Activated T-helper 1 cell treated with anti-CD3 and anti-CD28 coated beads, Interleukin-12 subunit alpha, Interleukin-12 subunit beta, Interleukin-2, Interleukin-4 antibody, amounts not matched to agents 30 ng/mL and 10 ng/mL and 1 ng/mL, durations not matched to agents 14 hours and 24 hours and 36 hours (primary cell): ENCODE measurements at regions of chr10 and their contacts with region 1.

Region 1: GRCh38 chr10:43461950-43462349 is 25.0 kb downstream of the ZNF487 start:
- DNase-seq: peak; percentile 33
- H3K4me3 Mint-ChIP-seq: no peak overlapping the region
- H3K27ac Mint-ChIP-seq: no peak overlapping the region
- H3K4me1 Mint-ChIP-seq: peaks cover 21% of the 10 kb centered on the region
- H3K27me3 Mint-ChIP-seq: peaks cover 1% of the 10 kb centered on the region

Region 2: GRCh38 chr10:42753126-42753506 is 708.8 kb before region 1 on chr10:
- intact Hi-C with region 1: loop called (anchors 1 kb)
- DNase-seq: peak; percentile 55
- H3K4me3 Mint-ChIP-seq: peak overlapping the region; percentile 45
- H3K27ac Mint-ChIP-seq: no peak overlapping the region
- H3K4me1 Mint-ChIP-seq: peaks cover 5% of the 10 kb centered on the region
- H3K27me3 Mint-ChIP-seq: peaks cover 54% of the 10 kb centered on the region

Region 3: GRCh38 chr10:43204943-43205671 is 256.8 kb before region 1 on chr10:
- intact Hi-C with region 1: loop called (anchors 1 kb)
- DNase-seq: peak; percentile 36
- H3K4me3 Mint-ChIP-seq: no peak overlapping the region
- H3K27ac Mint-ChIP-seq: no peak overlapping the region
- H3K4me1 Mint-ChIP-seq: no peaks in the 10 kb centered on the region
- H3K27me3 Mint-ChIP-seq: no peaks in the 10 kb centered on the region

Region 4: GRCh38 chr10:43265799-43266721 is 195.9 kb before region 1 on chr10:
- intact Hi-C with region 1: loop called (anchors 1 kb)
- DNase-seq: no peak
- H3K4me3 Mint-ChIP-seq: peak overlapping the region; percentile 80
- H3K27ac Mint-ChIP-seq: no peak overlapping the region
- H3K4me1 Mint-ChIP-seq: no peaks in the 10 kb centered on the region
- H3K27me3 Mint-ChIP-seq: peaks cover 54% of the 10 kb centered on the region

Region 5: GRCh38 chr10:43292755-43293676 is 168.9 kb before region 1 on chr10:
- intact Hi-C with region 1: loop called (anchors 1 kb)
- DNase-seq: no peak
- H3K4me3 Mint-ChIP-seq: peak overlapping the region; percentile 9
- H3K27ac Mint-ChIP-seq: peak overlapping the region; percentile 73
- H3K4me1 Mint-ChIP-seq: peaks cover 86% of the 10 kb centered on the region
- H3K27me3 Mint-ChIP-seq: peaks cover 9% of the 10 kb centered on the region

Region 6: GRCh38 chr10:43728425-43728824 is 266.5 kb after region 1 on chr10:
- intact Hi-C with region 1: no loop called
- DNase-seq: no peak
- H3K4me3 Mint-ChIP-seq: no peak overlapping the region
- H3K27ac Mint-ChIP-seq: no peak overlapping the region
- H3K4me1 Mint-ChIP-seq: no peaks in the 10 kb centered on the region
- H3K27me3 Mint-ChIP-seq: peaks cover 3% of the 10 kb centered on the region